Activated CD4-positive, alpha-beta memory T cell treated with anti-CD3 and anti-CD28 coated beads for 36 hours (primary cell): ENCODE measurements at regions of chr1 and their contacts with region 1.

Region 1: GRCh38 chr1:88180449-88181108 is 503.5 kb upstream of the PKN2 start:
- DNase-seq: peak; percentile 68
- H3K4me3 Mint-ChIP-seq: no peak overlapping the region
- H3K27ac Mint-ChIP-seq: no peak overlapping the region
- H3K4me1 Mint-ChIP-seq: no peaks in the 10 kb centered on the region
- H3K27me3 Mint-ChIP-seq: peaks cover 2% of the 10 kb centered on the region

Region 2: GRCh38 chr1:88029142-88029541 is 151.4 kb before region 1 on chr1:
- CTCF ChIA-PET with region 1: no interaction called
- POLR2A ChIA-PET with region 1: no interaction called
- intact Hi-C with region 1: no loop called
- DNase-seq: no peak
- H3K4me3 Mint-ChIP-seq: no peak overlapping the region
- H3K27ac Mint-ChIP-seq: no peak overlapping the region
- H3K4me1 Mint-ChIP-seq: no peaks in the 10 kb centered on the region
- H3K27me3 Mint-ChIP-seq: peaks cover 19% of the 10 kb centered on the region

Region 3: GRCh38 chr1:88191917-88192316 is 11.3 kb after region 1 on chr1:
- CTCF ChIA-PET with region 1: interaction called, 12 read pairs
- POLR2A ChIA-PET with region 1: no interaction called
- intact Hi-C with region 1: no loop called
- DNase-seq: no peak
- H3K4me3 Mint-ChIP-seq: no peak overlapping the region
- H3K27ac Mint-ChIP-seq: no peak overlapping the region
- H3K4me1 Mint-ChIP-seq: peaks cover 3% of the 10 kb centered on the region
- H3K27me3 Mint-ChIP-seq: no peaks in the 10 kb centered on the region

Region 4: GRCh38 chr1:88302843-88303486 is 122.4 kb after region 1 on chr1:
- CTCF ChIA-PET with region 1: interaction called, 6 read pairs
- POLR2A ChIA-PET with region 1: no interaction called
- intact Hi-C with region 1: loop called (anchors 10 kb)
- DNase-seq: no peak
- H3K4me3 Mint-ChIP-seq: no peak overlapping the region
- H3K27ac Mint-ChIP-seq: no peak overlapping the region
- H3K4me1 Mint-ChIP-seq: no peaks in the 10 kb centered on the region
- H3K27me3 Mint-ChIP-seq: no peaks in the 10 kb centered on the region

Region 5: GRCh38 chr1:88595355-88596002 is 414.9 kb after region 1 on chr1:
- CTCF ChIA-PET with region 1: interaction called, 11 read pairs
- POLR2A ChIA-PET with region 1: no interaction called
- intact Hi-C with region 1: loop called (anchors 1 kb)
- DNase-seq: no peak
- H3K4me3 Mint-ChIP-seq: no peak overlapping the region
- H3K27ac Mint-ChIP-seq: no peak overlapping the region
- H3K4me1 Mint-ChIP-seq: no peaks in the 10 kb centered on the region
- H3K27me3 Mint-ChIP-seq: peaks cover 2% of the 10 kb centered on the region